Heart left ventricle (tissue), 16 donors: ENCODE measurements at regions of chr11 and their contacts with region 1.

Region 1: DNA sequence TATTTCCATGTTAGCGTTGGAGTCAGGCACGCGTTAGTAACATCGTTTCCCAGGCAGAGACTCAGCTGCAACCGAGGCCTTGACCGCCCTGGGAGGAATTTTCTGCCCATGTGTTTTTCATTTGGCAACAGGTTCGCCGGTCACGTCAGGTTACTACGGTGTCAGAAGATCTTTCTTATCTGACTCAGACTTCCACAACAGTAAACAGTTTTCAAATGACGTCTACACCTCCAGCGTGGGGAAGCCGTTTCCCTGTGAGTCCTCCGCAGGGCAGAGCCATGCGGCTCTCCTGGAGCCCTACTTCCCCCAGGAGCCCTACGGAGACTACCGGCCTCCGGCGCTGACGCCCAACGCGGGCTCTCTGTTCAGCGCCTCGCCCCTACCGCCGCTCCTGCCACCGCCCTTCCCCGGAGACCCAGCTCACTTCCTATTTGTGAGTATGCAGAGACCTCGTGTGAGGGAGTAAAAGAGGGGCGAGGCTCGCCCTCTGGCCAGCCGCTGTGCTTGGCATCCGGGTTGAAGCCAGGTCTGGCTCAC is 14.3 kb upstream of the POU2AF3 start:
- DNase-seq: peak in 4 of 5 donors; percentile 16 to 39 (median 30)
- ATAC-seq: peak; percentile 27 to 84 (median 53)
- H3K4me3 ChIP-seq: no peak overlapping the region
- H3K27ac ChIP-seq: no peak overlapping the region
- H3K4me1 ChIP-seq: peaks cover 0 to 9% (median 0%) of the 10 kb centered on the region in 12 donors
- H3K27me3 ChIP-seq: peaks cover 0 to 6% (median 0%) of the 10 kb centered on the region in 9 donors
- CTCF ChIP-seq: no peak
- POLR2A ChIP-seq: no peak

Region 2: GRCh38 chr11:111185266-111185665 is 98.7 kb before region 1 on chr11:
- intact Hi-C with region 1: no loop called
- DNase-seq: no peak
- ATAC-seq: no peak
- H3K4me3 ChIP-seq: no peak overlapping the region
- H3K27ac ChIP-seq: no peak overlapping the region
- H3K4me1 ChIP-seq: peaks cover 0 to 6% (median 0%) of the 10 kb centered on the region in 12 donors
- H3K27me3 ChIP-seq: peaks cover 0 to 8% (median 0%) of the 10 kb centered on the region in 9 donors
- CTCF ChIP-seq: no peak
- POLR2A ChIP-seq: no peak

Region 3: DNA sequence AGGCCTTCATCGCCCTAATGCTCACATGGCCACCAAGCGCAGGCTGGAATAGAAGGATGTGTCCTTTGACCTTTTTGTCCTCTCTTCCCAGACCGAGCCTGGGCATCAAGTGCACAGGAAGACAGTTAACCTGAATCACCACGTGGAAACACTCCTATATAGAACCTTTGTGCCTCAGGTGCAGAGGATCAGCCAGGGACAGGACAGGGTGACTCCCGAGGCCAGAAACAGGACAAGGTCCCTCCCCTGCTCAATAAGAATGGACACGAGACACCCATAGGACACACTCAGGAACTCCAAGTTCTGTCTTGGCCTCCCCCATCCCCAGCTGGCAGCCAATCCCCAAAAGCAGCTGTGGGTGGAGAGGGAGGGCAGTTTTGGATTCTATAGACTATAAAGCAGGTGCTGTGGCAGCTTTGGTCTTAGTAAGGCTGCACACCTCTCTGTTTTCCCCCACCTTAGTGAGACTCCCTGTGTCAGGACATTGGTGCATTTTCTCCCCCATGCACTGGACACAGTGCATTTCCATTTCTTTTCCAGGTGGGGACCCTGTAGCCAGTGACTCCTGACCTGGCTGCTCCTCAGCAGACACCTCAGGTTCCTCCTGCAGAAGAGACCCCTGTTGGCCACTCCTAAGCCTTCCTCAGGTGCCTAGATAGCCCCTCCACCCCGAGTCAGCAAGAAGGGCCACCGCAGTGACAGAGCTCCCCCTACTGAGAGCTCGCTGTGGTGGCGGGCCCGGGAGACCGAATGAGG is 138.7 kb after region 1 on chr11:
- intact Hi-C with region 1: loop called (anchors 1 to 5 kb)
- DNase-seq: peak in 2 of 5 donors; percentile 32 to 47
- ATAC-seq: peak in 3 of 4 donors; percentile 68 to 78 (median 78)
- H3K4me3 ChIP-seq: no peak overlapping the region
- H3K27ac ChIP-seq: no peak overlapping the region
- H3K4me1 ChIP-seq: peaks cover 0 to 20% (median 5%) of the 10 kb centered on the region in 12 donors
- H3K27me3 ChIP-seq: peaks cover 0 to 6% (median 0%) of the 10 kb centered on the region in 9 donors
- CTCF ChIP-seq: peak; percentile 44 to 73 (median 66)
- POLR2A ChIP-seq: no peak

Region 4: GRCh38 chr11:111446404-111447111 is 162.5 kb after region 1 on chr11:
- intact Hi-C with region 1: loop called (anchors 1 to 2 kb)
- DNase-seq: peak in 4 of 5 donors; percentile 80 to 86 (median 84)
- ATAC-seq: peak; percentile 94 to 97 (median 95)
- H3K4me3 ChIP-seq: no peak overlapping the region
- H3K27ac ChIP-seq: peak overlapping the region in 2 of 12 donors; percentile 32 to 50
- H3K4me1 ChIP-seq: peaks cover 0 to 20% (median 8%) of the 10 kb centered on the region in 12 donors
- H3K27me3 ChIP-seq: peaks cover 0 to 8% (median 0%) of the 10 kb centered on the region in 9 donors
- CTCF ChIP-seq: peak; percentile 64 to 82 (median 74)
- POLR2A ChIP-seq: no peak

Region 5: DNA sequence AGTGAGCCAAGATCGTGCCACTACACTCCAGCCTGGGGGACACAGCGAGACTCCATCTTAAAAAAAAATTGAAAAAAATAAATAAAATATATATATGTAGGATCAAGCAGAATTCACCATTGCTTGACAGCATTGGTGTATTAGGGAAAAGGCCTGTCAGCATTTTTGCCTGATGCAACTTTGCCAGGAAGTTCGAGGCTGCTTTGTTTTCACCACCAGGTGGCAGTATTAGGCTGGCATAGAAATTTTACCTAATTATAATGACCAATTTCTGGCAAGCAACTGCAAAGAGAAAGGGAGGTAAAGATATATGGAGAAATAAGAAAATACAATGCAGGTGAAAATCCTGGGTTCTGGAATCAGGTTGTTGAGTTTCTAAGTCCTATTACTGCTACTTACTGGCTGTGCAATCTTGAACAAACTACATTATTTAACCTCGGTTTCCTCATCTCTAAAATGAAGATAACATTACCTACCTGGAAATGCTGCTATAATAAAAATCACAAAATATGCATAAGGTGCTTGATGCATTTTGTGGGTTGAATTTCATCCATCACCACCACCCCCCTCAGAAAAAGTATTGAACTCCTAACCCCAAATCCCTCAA is 281.2 kb after region 1 on chr11:
- intact Hi-C with region 1: loop called in 1 of 10 experiments (anchors 10 kb)
- DNase-seq: peak in 4 of 5 donors; percentile 48 to 64 (median 56)
- ATAC-seq: peak in 2 of 4 donors; percentile 52 to 63
- H3K4me3 ChIP-seq: no peak overlapping the region
- H3K27ac ChIP-seq: no peak overlapping the region
- H3K4me1 ChIP-seq: peaks cover 0 to 15% (median 0%) of the 10 kb centered on the region in 12 donors
- H3K27me3 ChIP-seq: no peaks in the 10 kb centered on the region
- CTCF ChIP-seq: peak; percentile 77 to 96 (median 92)
- POLR2A ChIP-seq: no peak